CD4-positive, alpha-beta memory T cell (primary cell): ENCODE measurements at regions of chr2 and their contacts with region 1.

Region 1: GRCh38 chr2:102753563-102754159 is 8.2 kb upstream of the TMEM182 start:
- DNase-seq: peak; percentile 21 to 37 (median 37)
- H3K4me3 ChIP-seq: no peak overlapping the region
- H3K4me3 Mint-ChIP-seq: no peak overlapping the region
- H3K27ac ChIP-seq: no peak overlapping the region
- H3K27ac Mint-ChIP-seq: no peak overlapping the region
- H3K4me1 ChIP-seq: no peaks in the 10 kb centered on the region
- H3K4me1 Mint-ChIP-seq: peaks cover 0 to 2% (median 0%) of the 10 kb centered on the region in 4 donors
- H3K27me3 ChIP-seq: no peaks in the 10 kb centered on the region
- H3K27me3 Mint-ChIP-seq: no peaks in the 10 kb centered on the region

Region 2: DNA sequence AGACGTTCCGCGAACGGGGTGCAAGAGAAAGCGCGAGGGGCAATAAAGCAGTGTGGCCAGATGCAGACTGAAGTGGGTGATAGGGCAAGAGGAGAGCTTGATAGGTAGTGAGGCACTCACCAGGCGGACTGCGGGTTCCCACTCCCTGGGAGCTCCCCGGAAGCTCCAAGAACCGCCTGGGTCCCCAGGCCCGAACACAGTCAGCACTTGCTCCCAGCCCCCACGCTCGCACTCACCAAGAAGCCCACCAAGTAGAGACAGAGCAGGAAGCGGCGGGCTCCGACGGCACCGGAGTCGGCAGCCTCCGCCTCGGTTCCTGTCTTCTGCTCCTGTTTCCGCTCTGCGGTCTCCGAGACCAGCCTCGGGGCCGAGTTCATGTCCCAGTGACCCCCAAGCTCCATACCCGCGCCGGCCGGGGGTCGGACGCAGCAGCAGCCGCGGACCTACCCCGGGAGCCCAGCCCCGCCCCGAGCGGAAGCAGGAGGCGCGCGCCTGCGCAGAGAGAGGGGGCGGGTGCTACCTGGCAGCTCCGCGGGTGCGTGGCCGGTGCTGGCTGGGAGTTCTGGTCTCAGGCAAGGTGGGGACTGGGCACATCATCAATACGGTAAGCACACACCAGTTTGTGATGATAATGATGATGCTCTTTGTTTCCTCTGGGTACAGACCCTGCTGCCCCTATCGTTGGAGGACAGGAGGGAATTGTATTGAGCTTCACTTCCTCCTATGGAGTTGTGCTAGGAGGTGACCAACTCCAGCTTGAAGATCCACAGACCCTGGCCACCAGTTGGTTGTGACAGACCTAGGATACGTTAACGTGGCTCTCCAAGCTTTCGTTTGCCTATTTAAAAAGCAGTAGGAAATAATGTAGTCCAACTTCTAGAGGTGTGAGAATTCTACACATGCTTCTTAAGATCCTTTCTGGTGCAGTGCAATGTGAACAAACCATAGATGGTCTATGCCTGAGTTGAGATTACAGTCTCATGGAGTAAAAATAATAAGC is 17.0 kb before region 1 on chr2:
- CTCF ChIA-PET with region 1: interaction called, 79 read pairs
- POLR2A ChIA-PET with region 1: interaction called, 4 read pairs
- intact Hi-C with region 1: no loop called
- DNase-seq: peak; percentile 80 to 84 (median 82)
- H3K4me3 ChIP-seq: peak overlapping the region; percentile 63 to 87
- H3K4me3 Mint-ChIP-seq: peak overlapping the region; percentile 96 to 98 (median 98)
- H3K27ac ChIP-seq: peak overlapping the region; percentile 55
- H3K27ac Mint-ChIP-seq: peak overlapping the region; percentile 73 to 95 (median 92)
- H3K4me1 ChIP-seq: peaks cover 35% of the 10 kb centered on the region
- H3K4me1 Mint-ChIP-seq: peaks cover 29 to 49% (median 38%) of the 10 kb centered on the region in 4 donors
- H3K27me3 ChIP-seq: no peaks in the 10 kb centered on the region
- H3K27me3 Mint-ChIP-seq: peaks cover 0 to 3% of the 10 kb centered on the region in 2 donors

Region 3: GRCh38 chr2:102771114-102771513 is 17.5 kb after region 1 on chr2:
- CTCF ChIA-PET with region 1: interaction called, 83 read pairs
- POLR2A ChIA-PET with region 1: no interaction called
- intact Hi-C with region 1: no loop called
- DNase-seq: no peak
- H3K4me3 ChIP-seq: no peak overlapping the region
- H3K4me3 Mint-ChIP-seq: no peak overlapping the region
- H3K27ac ChIP-seq: no peak overlapping the region
- H3K27ac Mint-ChIP-seq: no peak overlapping the region
- H3K4me1 ChIP-seq: no peaks in the 10 kb centered on the region
- H3K4me1 Mint-ChIP-seq: no peaks in the 10 kb centered on the region
- H3K27me3 ChIP-seq: no peaks in the 10 kb centered on the region
- H3K27me3 Mint-ChIP-seq: no peaks in the 10 kb centered on the region

Region 4: GRCh38 chr2:102806250-102806837 is 52.7 kb after region 1 on chr2:
- CTCF ChIA-PET with region 1: interaction called, 54 read pairs
- POLR2A ChIA-PET with region 1: no interaction called
- intact Hi-C with region 1: loop called (anchors 1 kb)
- DNase-seq: peak in 4 of 5 donors; percentile 12 to 34 (median 16)
- H3K4me3 ChIP-seq: no peak overlapping the region
- H3K4me3 Mint-ChIP-seq: peak overlapping the region in 1 of 8 donors; percentile 21
- H3K27ac ChIP-seq: no peak overlapping the region
- H3K27ac Mint-ChIP-seq: no peak overlapping the region
- H3K4me1 ChIP-seq: peaks cover 16% of the 10 kb centered on the region
- H3K4me1 Mint-ChIP-seq: peaks cover 13 to 22% (median 15%) of the 10 kb centered on the region in 4 donors
- H3K27me3 ChIP-seq: no peaks in the 10 kb centered on the region
- H3K27me3 Mint-ChIP-seq: no peaks in the 10 kb centered on the region

Region 5: DNA sequence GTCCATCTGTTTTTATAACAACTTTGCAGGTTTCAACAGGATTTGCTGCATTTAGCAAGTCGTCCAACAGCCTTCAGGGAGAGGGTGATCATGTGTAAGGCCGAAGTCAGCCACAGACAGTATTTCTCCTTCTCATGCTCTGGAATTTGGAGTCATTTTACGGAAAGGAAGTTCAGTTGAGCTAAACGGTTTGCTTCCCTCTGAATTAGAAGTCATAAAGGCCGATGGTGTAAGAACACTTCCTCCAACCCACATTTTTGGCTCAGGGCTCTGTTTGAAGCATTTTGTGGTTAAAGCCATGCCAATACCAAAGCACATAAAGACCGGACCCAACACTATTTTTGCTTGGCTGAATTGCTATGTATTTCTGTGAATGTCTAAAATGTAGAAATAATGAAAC is 137.6 kb after region 1 on chr2:
- CTCF ChIA-PET with region 1: no interaction called
- POLR2A ChIA-PET with region 1: no interaction called
- intact Hi-C with region 1: no loop called
- DNase-seq: no peak
- H3K4me3 ChIP-seq: no peak overlapping the region
- H3K4me3 Mint-ChIP-seq: no peak overlapping the region
- H3K27ac ChIP-seq: no peak overlapping the region
- H3K27ac Mint-ChIP-seq: no peak overlapping the region
- H3K4me1 ChIP-seq: no peaks in the 10 kb centered on the region
- H3K4me1 Mint-ChIP-seq: no peaks in the 10 kb centered on the region
- H3K27me3 ChIP-seq: no peaks in the 10 kb centered on the region
- H3K27me3 Mint-ChIP-seq: peaks cover 0 to 2% of the 10 kb centered on the region in 2 donors